ENCODE measurements at regions of chr18 and their contacts with region 1.

Region 1: GRCh38 chr18:78875268-78875997 is 104.2 kb upstream of the SALL3 start:
- DNase-seq: no peak
- H3K4me3 ChIP-seq: no peak overlapping the region
- H3K27ac ChIP-seq: no peak overlapping the region
- H3K4me1 ChIP-seq: no peaks in the 10 kb centered on the region
- H3K27me3 ChIP-seq: peaks cover 0 to 39% (median 0%) of the 10 kb centered on the region in 7 donors
- CTCF ChIP-seq: peak in 8 of 11 experiments; percentile 20 to 51 (median 32)
- POLR2A ChIP-seq: no peak

Region 2: DNA sequence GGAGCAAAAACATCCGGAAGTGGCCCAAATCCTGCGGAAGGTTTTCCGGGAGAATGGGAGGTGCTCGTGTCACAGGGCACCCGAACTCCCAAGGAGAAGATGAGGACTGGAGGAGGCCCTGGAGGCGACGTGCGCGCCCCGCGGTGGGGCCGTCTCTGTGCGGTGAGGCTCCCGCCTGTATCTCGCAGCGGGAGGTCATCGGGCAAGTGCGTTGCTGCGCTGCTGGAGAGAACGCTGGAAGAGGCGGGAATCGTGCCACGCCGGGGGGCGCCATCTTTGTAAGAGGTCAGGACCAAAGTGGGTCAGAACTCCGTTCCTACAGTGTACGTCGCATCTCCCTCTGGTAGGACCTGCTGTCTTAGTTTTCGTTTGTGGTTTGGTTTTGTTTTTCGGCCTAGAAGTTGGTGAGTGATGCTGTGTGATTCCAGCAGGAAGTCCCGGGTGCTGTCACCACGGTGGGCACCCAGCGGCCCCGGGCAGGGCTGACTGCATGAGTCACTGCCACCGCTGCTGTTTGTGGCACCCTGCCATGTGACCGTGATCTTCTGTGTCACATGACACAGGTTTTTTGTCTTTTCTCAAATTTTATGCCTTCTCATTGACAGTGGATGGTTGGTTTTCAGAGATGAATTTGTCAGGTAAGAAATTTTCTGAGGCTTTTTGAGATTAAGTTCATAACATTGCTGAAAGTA is 172.3 kb after region 1 on chr18:
- intact Hi-C with region 1: no loop called
- DNase-seq: no peak
- H3K4me3 ChIP-seq: no peak overlapping the region
- H3K27ac ChIP-seq: no peak overlapping the region
- H3K4me1 ChIP-seq: no peaks in the 10 kb centered on the region
- H3K27me3 ChIP-seq: peaks cover 0 to 10% (median 0%) of the 10 kb centered on the region in 7 donors
- CTCF ChIP-seq: no peak
- POLR2A ChIP-seq: no peak

Region 3: DNA sequence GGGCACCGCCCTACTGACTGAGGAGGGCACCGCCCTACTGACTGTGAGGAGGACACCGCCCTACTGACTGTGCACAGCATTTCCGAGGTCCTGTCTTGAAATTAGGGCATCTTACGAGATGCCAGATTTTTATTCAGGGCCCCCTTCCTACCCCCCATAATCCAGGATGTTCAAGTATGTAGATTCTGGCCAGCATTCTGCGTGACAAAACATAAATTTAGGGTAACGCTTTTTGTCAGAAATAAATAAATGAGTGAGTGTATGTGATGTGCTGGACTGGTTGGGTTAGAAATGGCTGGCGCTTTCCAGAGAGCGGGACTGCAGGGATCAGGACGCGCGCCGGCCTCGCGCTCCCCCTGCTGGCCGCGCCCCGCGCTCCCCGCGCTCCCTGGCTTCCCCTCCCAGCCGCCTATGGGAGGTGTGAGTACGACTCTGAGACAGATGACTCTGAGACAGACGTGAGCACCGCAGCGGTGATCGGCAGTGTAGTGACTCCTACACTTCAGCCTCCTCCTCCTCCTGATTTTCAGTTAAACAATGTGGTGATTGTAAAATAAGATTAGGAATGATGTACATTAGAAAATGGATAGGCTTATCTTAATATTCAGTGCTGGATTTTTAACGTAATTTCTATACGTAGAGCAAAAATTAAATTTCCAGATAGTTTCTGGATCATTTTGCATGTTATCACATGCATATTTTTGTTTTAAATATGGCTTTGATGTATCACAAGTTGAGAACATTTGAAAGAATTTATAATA is 371.1 kb after region 1 on chr18:
- intact Hi-C with region 1: loop called (anchors 10 kb)
- DNase-seq: peak; percentile 90
- H3K4me3 ChIP-seq: peak overlapping the region in 1 of 8 donors; percentile 50
- H3K27ac ChIP-seq: peak overlapping the region in 2 of 8 donors; percentile 6 to 19
- H3K4me1 ChIP-seq: peaks cover 4 to 11% (median 8%) of the 10 kb centered on the region in 6 donors
- H3K27me3 ChIP-seq: no peaks in the 10 kb centered on the region
- CTCF ChIP-seq: peak; percentile 56 to 96 (median 91)
- POLR2A ChIP-seq: no peak

Measured in spleen (tissue), 13 donors.